ENCODE measurements at regions of chr21 and their contacts with region 1.

Region 1: DNA sequence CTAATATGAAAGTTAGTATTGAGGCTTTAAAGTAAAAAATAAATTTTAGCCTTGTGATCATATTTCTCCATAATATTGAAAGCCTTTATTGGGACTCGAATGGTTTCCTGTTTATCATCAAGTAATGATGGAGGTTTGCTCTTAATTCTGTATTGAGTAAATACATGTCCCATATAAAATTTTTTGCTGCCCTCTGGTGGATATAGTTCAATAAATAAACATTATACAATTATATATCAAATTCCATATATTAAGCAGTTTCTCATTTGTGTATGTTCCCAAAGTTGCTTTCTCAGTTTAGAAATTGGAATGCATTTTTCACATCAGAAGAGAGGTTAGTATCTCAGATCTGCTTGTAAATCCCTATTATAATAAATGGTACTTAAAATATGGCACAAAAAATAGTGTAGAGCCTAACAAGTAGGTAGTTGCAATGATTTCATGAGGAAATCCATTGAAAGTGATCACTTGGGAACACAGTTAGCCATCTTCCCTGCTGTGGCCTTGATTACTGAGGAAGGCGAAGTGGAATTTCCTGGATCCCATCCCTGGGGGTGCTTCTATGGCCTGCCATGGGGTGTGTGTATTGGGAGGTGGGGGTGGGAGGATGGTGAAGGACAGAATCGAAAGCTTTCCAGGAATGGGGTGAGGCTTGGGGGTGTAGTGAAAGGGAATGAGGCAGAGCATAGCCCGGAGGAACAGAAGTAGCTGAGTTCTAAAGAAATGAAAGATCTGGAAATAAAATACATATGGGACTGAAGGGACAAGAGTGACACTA is 84.1 kb upstream of the C21orf91 start:
- DNase-seq: peak; percentile 29
- H3K4me3 ChIP-seq: no peak overlapping the region
- H3K27ac ChIP-seq: no peak overlapping the region
- H3K4me1 ChIP-seq: no peaks in the 10 kb centered on the region
- H3K27me3 ChIP-seq: no peaks in the 10 kb centered on the region
- CTCF ChIP-seq: no peak
- POLR2A ChIP-seq: no peak

Region 2: GRCh38 chr21:17679002-17679600 is 224.1 kb before region 1 on chr21:
- CTCF ChIA-PET with region 1: interaction called, 9 read pairs
- POLR2A ChIA-PET with region 1: no interaction called
- dilution Hi-C with region 1: no loop called
- intact Hi-C with region 1: loop called (anchors 1 kb)
- DNase-seq: peak; percentile 61
- H3K4me3 ChIP-seq: no peak overlapping the region
- H3K27ac ChIP-seq: no peak overlapping the region
- H3K4me1 ChIP-seq: no peaks in the 10 kb centered on the region
- H3K27me3 ChIP-seq: no peaks in the 10 kb centered on the region
- CTCF ChIP-seq: peak; percentile 55 to 57
- POLR2A ChIP-seq: no peak

Region 3: DNA sequence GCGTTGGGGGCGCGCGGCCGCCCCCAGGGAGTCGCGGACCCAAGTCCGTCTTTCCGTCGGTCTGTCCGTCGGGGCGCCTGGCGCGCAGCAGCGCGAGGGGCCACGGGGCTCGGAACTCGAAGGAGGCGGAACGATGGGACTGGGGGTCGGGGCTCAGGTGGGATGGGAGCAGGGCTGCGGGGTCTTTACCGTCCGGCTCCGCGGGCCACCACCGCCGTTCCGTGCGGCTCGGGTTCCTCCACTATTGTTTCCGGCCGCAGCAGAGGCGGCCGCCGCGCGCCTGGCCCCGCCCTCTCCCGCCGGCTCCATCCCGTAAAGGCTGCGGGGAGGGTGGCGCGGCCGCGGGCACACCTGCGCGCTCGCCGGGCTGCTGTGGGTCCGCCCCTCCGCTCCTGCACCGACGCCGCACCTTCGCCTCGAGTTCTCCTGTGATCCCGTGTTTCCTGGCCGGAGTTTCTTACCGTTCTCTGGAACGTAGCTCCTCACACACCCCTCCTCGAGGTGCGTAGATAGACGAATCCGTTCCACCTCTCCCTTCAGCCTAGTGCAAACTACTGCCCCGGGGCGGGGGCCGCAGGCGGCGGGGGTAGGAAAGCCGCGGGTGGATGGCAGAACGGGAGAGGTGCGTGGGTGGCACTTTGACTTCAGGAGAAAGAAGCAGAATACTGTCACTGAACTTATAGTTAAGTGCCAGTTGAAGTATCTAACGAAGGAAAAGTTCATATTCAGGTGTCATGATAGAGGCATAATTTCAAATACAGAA is 83.9 kb before region 1 on chr21 and contains the start of gene C21orf91:
- CTCF ChIA-PET with region 1: no interaction called
- POLR2A ChIA-PET with region 1: no interaction called
- dilution Hi-C with region 1: no loop called
- intact Hi-C with region 1: loop called (anchors 5 kb)
- DNase-seq: peak; percentile 86
- H3K4me3 ChIP-seq: peak within 1 kb of the TSS; percentile 56 to 82 (median 72)
- H3K27ac ChIP-seq: peak within 1 kb of the TSS; percentile 75
- H3K4me1 ChIP-seq: peaks cover 10% of the 10 kb centered on the region
- H3K27me3 ChIP-seq: peaks cover 0 to 3% of the 10 kb centered on the region in 2 experiments
- CTCF ChIP-seq: no peak
- POLR2A ChIP-seq: peak; percentile 85
- total RNA-seq, gene C21orf91: 4.2 and 5.4 TPM in 2 replicates

Region 4: GRCh38 chr21:18191139-18191538 is 287.9 kb after region 1 on chr21:
- CTCF ChIA-PET with region 1: no interaction called
- POLR2A ChIA-PET with region 1: no interaction called
- dilution Hi-C with region 1: no loop called
- intact Hi-C with region 1: no loop called
- DNase-seq: no peak
- H3K4me3 ChIP-seq: no peak overlapping the region
- H3K27ac ChIP-seq: no peak overlapping the region
- H3K4me1 ChIP-seq: no peaks in the 10 kb centered on the region
- H3K27me3 ChIP-seq: no peaks in the 10 kb centered on the region
- CTCF ChIP-seq: no peak
- POLR2A ChIP-seq: no peak